CD14-positive monocyte (primary cell): ENCODE measurements at regions of chr6 and their contacts with region 1.

Region 1: GRCh38 chr6:37324131-37325033 is 29.4 kb upstream of the RNF8 start:
- DNase-seq: peak in 1 of 3 donors; percentile 18
- H3K4me3 ChIP-seq: no peak overlapping the region
- H3K4me3 Mint-ChIP-seq: no peak overlapping the region
- H3K27ac ChIP-seq: no peak overlapping the region
- H3K27ac Mint-ChIP-seq: peak overlapping the region in 2 of 7 donors; percentile 37 to 66
- H3K4me1 ChIP-seq: no peaks in the 10 kb centered on the region
- H3K4me1 Mint-ChIP-seq: no peaks in the 10 kb centered on the region
- H3K27me3 ChIP-seq: no peaks in the 10 kb centered on the region
- H3K27me3 Mint-ChIP-seq: no peaks in the 10 kb centered on the region
- CTCF ChIP-seq: no peak

Region 2: GRCh38 chr6:37239950-37240713 is 84.2 kb before region 1 on chr6:
- intact Hi-C with region 1: no loop called
- DNase-seq: peak; percentile 87 to 92 (median 89)
- H3K4me3 ChIP-seq: no peak overlapping the region
- H3K4me3 Mint-ChIP-seq: no peak overlapping the region
- H3K27ac ChIP-seq: peak overlapping the region; percentile 64 to 75
- H3K27ac Mint-ChIP-seq: peak overlapping the region; percentile 86 to 97 (median 92)
- H3K4me1 ChIP-seq: peaks cover 23 to 26% of the 10 kb centered on the region in 2 donors
- H3K4me1 Mint-ChIP-seq: peaks cover 26% of the 10 kb centered on the region
- H3K27me3 ChIP-seq: no peaks in the 10 kb centered on the region
- H3K27me3 Mint-ChIP-seq: no peaks in the 10 kb centered on the region
- CTCF ChIP-seq: no peak

Region 3: GRCh38 chr6:37339741-37340638 is 15.6 kb after region 1 on chr6:
- intact Hi-C with region 1: no loop called
- DNase-seq: no peak
- H3K4me3 ChIP-seq: no peak overlapping the region
- H3K4me3 Mint-ChIP-seq: no peak overlapping the region
- H3K27ac ChIP-seq: no peak overlapping the region
- H3K27ac Mint-ChIP-seq: no peak overlapping the region
- H3K4me1 ChIP-seq: no peaks in the 10 kb centered on the region
- H3K4me1 Mint-ChIP-seq: no peaks in the 10 kb centered on the region
- H3K27me3 ChIP-seq: peaks cover 0 to 3% of the 10 kb centered on the region in 2 donors
- H3K27me3 Mint-ChIP-seq: peaks cover 2 to 6% (median 4%) of the 10 kb centered on the region in 3 donors
- CTCF ChIP-seq: no peak

Region 4: DNA sequence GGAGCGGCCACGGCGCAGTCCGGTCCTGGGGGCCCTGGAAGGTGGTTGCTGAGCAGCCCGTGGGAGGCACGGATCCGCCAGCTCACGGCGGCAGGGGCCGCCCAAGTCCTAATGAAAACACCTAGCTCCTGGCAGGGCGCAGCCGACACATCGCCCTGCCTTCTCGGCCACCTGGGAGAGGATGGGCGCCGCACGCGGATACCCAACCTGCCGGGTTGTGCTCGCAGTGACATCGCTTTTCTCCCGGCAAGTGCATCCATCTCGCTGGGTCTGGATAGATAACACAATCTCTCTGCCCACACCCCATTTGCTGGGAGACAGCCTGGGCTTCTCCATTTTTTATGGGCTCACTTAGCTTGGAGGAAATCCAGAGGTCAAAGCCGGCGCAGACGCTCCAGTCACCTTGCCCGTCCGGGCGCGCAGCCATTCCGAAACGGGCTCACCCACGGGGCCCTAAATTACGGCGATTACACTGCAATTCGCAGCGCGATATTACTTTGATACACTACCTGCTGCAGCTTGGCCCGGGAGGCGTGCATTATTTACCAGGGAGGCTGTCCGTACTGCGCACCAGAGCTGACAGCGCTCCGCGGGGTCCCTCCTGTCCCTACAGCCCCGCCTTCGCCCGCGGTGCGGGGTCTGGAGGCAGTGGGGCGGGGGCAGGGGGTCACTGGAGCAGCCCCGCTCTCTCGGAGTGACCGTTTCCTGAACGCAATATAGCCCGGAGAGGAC is 211.5 kb after region 1 on chr6:
- intact Hi-C with region 1: no loop called
- DNase-seq: no peak
- H3K4me3 ChIP-seq: no peak overlapping the region
- H3K4me3 Mint-ChIP-seq: peak overlapping the region; percentile 39 to 65
- H3K27ac ChIP-seq: no peak overlapping the region
- H3K27ac Mint-ChIP-seq: no peak overlapping the region
- H3K4me1 ChIP-seq: peaks cover 0 to 7% of the 10 kb centered on the region in 2 donors
- H3K4me1 Mint-ChIP-seq: peaks cover 4% of the 10 kb centered on the region
- H3K27me3 ChIP-seq: peaks cover 27 to 59% of the 10 kb centered on the region in 2 donors
- H3K27me3 Mint-ChIP-seq: peaks cover 68 to 80% (median 75%) of the 10 kb centered on the region in 3 donors
- CTCF ChIP-seq: no peak

Region 5: DNA sequence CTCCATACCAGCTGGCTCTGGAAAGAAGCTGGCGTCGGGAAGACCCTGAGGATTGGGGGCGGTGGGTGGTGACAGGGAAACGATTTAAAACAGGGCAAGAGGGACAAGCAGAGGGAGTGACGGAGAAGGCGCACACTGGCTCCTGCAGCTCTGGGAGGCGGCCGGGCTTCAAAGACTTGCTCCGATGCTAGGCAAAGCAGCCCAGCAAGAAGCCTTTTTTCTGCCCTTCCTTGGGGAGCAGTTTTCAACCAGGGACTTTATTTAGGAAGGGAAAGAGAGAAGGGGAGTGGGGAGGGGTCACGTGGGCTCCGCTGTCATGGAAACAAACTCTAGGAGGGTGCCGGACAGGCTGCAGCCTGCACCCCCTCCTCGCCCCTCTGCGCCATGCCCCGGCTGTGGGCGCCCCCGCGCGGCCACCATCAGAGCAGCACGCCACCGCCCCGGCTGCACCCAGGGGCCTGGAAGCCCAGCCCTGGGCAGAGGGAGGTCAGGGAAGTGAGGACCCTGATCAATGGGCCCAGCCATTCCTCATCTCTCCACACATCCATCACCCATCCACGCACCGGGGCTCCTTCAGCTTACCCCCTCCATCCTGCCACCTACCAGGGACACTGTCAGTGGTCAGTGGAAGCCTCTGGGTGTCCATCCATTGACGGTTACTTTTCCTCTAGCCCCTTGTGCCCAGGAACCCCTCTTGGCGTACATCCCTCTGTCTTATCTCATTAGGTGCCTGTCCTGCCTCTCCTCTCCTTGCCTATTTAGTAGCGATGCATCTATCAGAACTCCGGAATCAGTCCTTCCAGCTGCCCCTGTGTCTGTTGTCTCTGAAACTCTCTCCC is 241.9 kb after region 1 on chr6:
- intact Hi-C with region 1: loop called in 1 of 2 experiments (anchors 10 kb)
- DNase-seq: peak in 1 of 3 donors; percentile 29
- H3K4me3 ChIP-seq: no peak overlapping the region
- H3K4me3 Mint-ChIP-seq: peak overlapping the region in 1 of 2 donors; percentile 63
- H3K27ac ChIP-seq: no peak overlapping the region
- H3K27ac Mint-ChIP-seq: no peak overlapping the region
- H3K4me1 ChIP-seq: peaks cover 0 to 6% of the 10 kb centered on the region in 2 donors
- H3K4me1 Mint-ChIP-seq: peaks cover 5% of the 10 kb centered on the region
- H3K27me3 ChIP-seq: peaks cover 12% of the 10 kb centered on the region in 2 donors
- H3K27me3 Mint-ChIP-seq: peaks cover 26 to 53% (median 39%) of the 10 kb centered on the region in 3 donors
- CTCF ChIP-seq: peak; percentile 87